ENCODE measurements at regions of chr12 and their contacts with region 1.

Region 1: DNA sequence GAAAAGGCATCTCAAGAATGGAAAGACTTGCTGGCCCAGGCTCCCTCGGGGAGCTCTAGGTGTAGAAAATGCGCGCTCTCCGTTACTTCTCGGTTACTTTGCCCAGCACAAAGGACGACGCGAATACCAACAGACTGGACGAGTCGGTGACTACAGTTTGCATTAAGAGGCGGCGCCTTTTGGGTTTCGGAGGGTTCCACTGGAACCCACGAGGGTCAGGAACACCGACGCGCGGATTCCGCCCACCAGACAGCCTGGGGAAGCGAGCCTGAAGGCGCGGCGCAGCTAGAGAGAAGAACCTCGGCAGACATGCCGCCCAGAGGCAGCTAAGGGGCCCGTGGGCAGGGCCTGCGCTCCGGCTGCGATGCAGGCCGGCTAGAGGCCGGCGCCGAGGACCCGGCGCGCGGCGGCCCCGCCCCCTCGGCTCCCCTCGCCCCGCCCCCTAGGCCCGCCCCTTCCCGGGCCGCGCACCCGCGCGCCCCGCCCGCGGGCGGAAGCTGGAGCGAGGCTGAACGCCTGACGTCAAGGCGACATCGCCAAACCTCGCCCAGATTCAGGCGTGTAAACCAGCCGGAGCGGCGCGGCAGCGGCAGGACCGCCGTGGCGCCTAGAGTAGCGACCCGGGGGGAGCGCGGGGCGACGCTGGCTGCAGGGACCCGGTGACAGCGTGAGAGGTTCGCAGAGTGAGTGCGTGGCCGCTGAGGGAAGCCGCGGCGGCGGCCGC is at the start of gene RAP1B:
- DNase-seq: peak; percentile 90 to 91 (median 90)
- H3K4me3 ChIP-seq: peak within 1 kb of the TSS; percentile 88
- H3K4me3 Mint-ChIP-seq: peak within 1 kb of the TSS; percentile 90 to 98 (median 97)
- H3K27ac ChIP-seq: peak within 1 kb of the TSS; percentile 88
- H3K27ac Mint-ChIP-seq: peak within 1 kb of the TSS; percentile 94 to 99 (median 97)
- H3K4me1 ChIP-seq: peaks cover 39% of the 10 kb centered on the region
- H3K4me1 Mint-ChIP-seq: peaks cover 26 to 49% (median 37%) of the 10 kb centered on the region in 4 donors
- H3K27me3 ChIP-seq: no peaks in the 10 kb centered on the region
- H3K27me3 Mint-ChIP-seq: no peaks in the 10 kb centered on the region
- total RNA-seq, gene RAP1B: 193 to 195 TPM

Region 2: GRCh38 chr12:67268896-67269631 is 1341.5 kb before region 1 on chr12 and contains the start of gene CAND1:
- CTCF ChIA-PET with region 1: no interaction called
- POLR2A ChIA-PET with region 1: interaction called, 6 read pairs
- intact Hi-C with region 1: loop called (anchors 1 kb)
- DNase-seq: peak; percentile 98 to 99 (median 99)
- H3K4me3 ChIP-seq: peak within 1 kb of the TSS; percentile 81 to 84
- H3K4me3 Mint-ChIP-seq: peak within 1 kb of the TSS; percentile 92 to 99 (median 98)
- H3K27ac ChIP-seq: peak within 1 kb of the TSS; percentile 97
- H3K27ac Mint-ChIP-seq: peak within 1 kb of the TSS; percentile 95 to 100 (median 99)
- H3K4me1 ChIP-seq: peaks cover 45% of the 10 kb centered on the region
- H3K4me1 Mint-ChIP-seq: peaks cover 28 to 52% (median 39%) of the 10 kb centered on the region in 4 donors
- H3K27me3 ChIP-seq: no peaks in the 10 kb centered on the region
- H3K27me3 Mint-ChIP-seq: no peaks in the 10 kb centered on the region
- total RNA-seq, gene CAND1: 124 TPM

Region 3: GRCh38 chr12:68319988-68320623 is 290.4 kb before region 1 on chr12:
- CTCF ChIA-PET with region 1: no interaction called
- POLR2A ChIA-PET with region 1: no interaction called
- intact Hi-C with region 1: no loop called
- DNase-seq: no peak
- H3K4me3 ChIP-seq: no peak overlapping the region
- H3K4me3 Mint-ChIP-seq: no peak overlapping the region
- H3K27ac ChIP-seq: no peak overlapping the region
- H3K27ac Mint-ChIP-seq: peak overlapping the region in 1 of 7 donors; percentile 73
- H3K4me1 ChIP-seq: no peaks in the 10 kb centered on the region
- H3K4me1 Mint-ChIP-seq: peaks cover 0 to 2% (median 0%) of the 10 kb centered on the region in 4 donors
- H3K27me3 ChIP-seq: no peaks in the 10 kb centered on the region
- H3K27me3 Mint-ChIP-seq: no peaks in the 10 kb centered on the region

Region 4: DNA sequence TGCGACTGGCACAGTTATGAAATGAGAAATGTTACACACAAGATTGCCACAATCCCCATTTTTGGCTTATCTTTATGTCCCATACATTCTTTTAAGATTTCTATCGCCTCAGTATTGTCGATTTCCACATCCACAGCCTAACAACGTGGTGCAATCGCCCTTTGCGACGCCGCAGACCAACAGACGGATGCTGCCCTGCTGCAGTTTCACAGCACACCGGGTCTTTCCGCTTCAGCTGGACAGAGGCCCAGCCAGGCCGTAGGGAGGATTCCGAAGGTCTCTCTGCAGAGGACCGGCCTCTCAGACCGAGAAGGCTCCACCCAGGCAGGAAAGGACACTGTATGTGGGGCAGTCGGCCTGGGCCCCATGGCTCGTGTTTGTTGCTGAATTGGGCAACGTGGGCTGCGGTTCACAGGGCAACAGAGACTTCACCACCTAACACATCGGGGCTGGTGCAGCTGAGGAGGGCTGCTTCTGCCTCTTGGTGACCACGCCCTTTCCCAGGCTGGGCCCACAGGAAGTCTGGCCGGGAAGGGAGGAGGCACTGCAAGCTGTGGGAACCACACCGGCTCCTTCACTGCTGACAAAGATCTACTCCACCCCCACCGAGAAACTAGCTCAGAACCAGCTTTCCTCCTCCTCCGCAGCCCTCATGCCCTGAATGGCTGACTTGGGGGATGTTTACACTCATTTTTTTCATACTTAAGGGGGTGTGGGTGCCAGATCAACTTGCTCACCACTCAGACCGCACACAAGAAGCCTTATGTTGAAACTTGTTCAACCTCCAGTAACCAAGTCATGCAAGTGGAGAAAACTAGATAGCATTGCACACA is 245.4 kb before region 1 on chr12:
- CTCF ChIA-PET with region 1: interaction called, 46 read pairs
- POLR2A ChIA-PET with region 1: interaction called, 55 read pairs
- intact Hi-C with region 1: loop called (anchors 1 kb)
- DNase-seq: peak; percentile 82 to 91 (median 88)
- H3K4me3 ChIP-seq: peak overlapping the region in 1 of 2 donors; percentile 51
- H3K4me3 Mint-ChIP-seq: peak overlapping the region; percentile 77 to 92 (median 84)
- H3K27ac ChIP-seq: peak overlapping the region; percentile 76
- H3K27ac Mint-ChIP-seq: peak overlapping the region; percentile 91 to 97 (median 96)
- H3K4me1 ChIP-seq: peaks cover 59% of the 10 kb centered on the region
- H3K4me1 Mint-ChIP-seq: peaks cover 54 to 81% (median 60%) of the 10 kb centered on the region in 4 donors
- H3K27me3 ChIP-seq: no peaks in the 10 kb centered on the region
- H3K27me3 Mint-ChIP-seq: no peaks in the 10 kb centered on the region

Region 5: GRCh38 chr12:68462803-68463202 is 147.7 kb before region 1 on chr12:
- CTCF ChIA-PET with region 1: no interaction called
- POLR2A ChIA-PET with region 1: interaction called, 5 read pairs
- intact Hi-C with region 1: loop called (anchors 5 kb)
- DNase-seq: peak in 3 of 5 donors; percentile 23 to 28 (median 23)
- H3K4me3 ChIP-seq: peak overlapping the region; percentile 30 to 42
- H3K4me3 Mint-ChIP-seq: peak overlapping the region; percentile 81 to 93 (median 86)
- H3K27ac ChIP-seq: peak overlapping the region; percentile 34
- H3K27ac Mint-ChIP-seq: peak overlapping the region; percentile 70 to 95 (median 93)
- H3K4me1 ChIP-seq: peaks cover 9% of the 10 kb centered on the region
- H3K4me1 Mint-ChIP-seq: peaks cover 10 to 28% (median 14%) of the 10 kb centered on the region in 4 donors
- H3K27me3 ChIP-seq: no peaks in the 10 kb centered on the region
- H3K27me3 Mint-ChIP-seq: no peaks in the 10 kb centered on the region

Region 6: DNA sequence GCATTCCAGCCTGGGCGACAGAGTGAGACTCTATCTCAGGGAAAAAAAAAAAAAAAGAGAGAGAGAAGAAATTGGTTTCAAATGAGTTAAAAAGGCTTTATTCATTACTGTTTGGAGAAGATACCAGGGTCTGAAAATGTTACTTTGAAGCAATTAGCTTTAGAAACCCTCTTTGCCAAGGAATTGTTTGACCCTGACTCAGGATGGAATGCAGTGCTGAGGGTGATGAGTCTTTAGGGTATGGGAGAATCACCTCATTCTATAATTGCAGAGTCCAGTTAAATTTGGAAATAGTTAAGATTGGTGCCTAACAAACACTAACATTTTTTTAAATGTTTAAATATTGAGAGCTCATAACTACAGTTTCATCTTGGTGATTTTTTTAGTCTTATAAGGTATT is 13.5 kb after region 1 on chr12:
- CTCF ChIA-PET with region 1: interaction called, 3 read pairs
- POLR2A ChIA-PET with region 1: interaction called, 66 read pairs
- intact Hi-C with region 1: loop called (anchors 2 kb)
- DNase-seq: no peak
- H3K4me3 ChIP-seq: no peak overlapping the region
- H3K4me3 Mint-ChIP-seq: peak overlapping the region in 5 of 8 donors; percentile 4 to 55 (median 21)
- H3K27ac ChIP-seq: no peak overlapping the region
- H3K27ac Mint-ChIP-seq: peak overlapping the region in 4 of 7 donors; percentile 31 to 60 (median 52)
- H3K4me1 ChIP-seq: peaks cover 87% of the 10 kb centered on the region
- H3K4me1 Mint-ChIP-seq: peaks cover 52 to 92% (median 74%) of the 10 kb centered on the region in 4 donors
- H3K27me3 ChIP-seq: no peaks in the 10 kb centered on the region
- H3K27me3 Mint-ChIP-seq: no peaks in the 10 kb centered on the region

Region 7: DNA sequence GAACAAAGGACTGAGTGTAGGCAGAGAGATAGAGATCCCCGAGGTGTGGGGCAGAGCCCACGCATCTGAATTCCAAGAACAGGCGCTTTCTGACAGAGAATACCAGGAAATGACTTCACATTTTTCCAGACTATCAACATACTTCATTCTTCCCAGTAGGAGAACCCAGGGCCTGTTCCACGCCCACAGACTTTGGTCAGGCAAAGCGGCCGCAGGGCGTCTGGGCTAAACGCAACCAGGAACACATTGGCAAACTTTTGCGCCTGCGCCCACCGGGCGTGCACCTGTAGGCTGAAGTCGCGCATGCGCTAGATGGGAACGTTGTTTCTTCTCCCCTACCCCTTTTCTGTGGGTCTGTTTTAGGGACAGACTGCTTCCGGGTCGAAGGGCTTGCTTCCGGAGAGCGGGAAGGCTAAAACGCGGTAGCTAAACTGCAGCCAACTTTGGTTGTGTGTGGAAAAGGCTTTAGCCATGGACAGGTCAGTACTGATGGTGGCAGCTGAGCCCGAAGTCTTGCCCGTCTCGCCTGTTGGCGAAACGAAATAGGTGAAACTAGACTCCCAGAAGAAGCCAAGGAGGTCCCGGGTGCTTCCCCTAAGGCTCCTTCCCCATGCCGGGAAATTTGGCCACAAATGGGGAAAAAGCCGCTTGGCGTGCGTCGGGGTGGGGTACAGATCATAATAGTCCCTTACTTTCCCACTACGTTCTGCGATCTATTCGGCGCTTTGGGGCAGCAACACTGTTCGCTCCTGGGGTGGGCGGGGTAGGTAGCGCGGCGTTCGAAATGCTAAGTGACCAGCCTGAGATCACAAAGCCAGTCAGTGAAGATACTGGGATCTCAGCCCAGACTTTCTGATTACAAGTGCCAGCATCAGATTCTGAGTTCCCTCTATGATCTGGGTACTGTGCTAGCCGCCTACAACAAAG is 76.3 kb after region 1 on chr12 and contains the start of gene NUP107:
- CTCF ChIA-PET with region 1: interaction called, 3 read pairs
- POLR2A ChIA-PET with region 1: interaction called, 25 read pairs
- intact Hi-C with region 1: loop called (anchors 1 kb)
- DNase-seq: peak; percentile 95 to 98 (median 95)
- H3K4me3 ChIP-seq: peak within 1 kb of the TSS; percentile 90 to 98
- H3K4me3 Mint-ChIP-seq: peak within 1 kb of the TSS; percentile 98 to 99 (median 98)
- H3K27ac ChIP-seq: peak within 1 kb of the TSS; percentile 85
- H3K27ac Mint-ChIP-seq: peak within 1 kb of the TSS; percentile 91 to 100 (median 99)
- H3K4me1 ChIP-seq: peaks cover 30% of the 10 kb centered on the region
- H3K4me1 Mint-ChIP-seq: peaks cover 14 to 44% (median 29%) of the 10 kb centered on the region in 4 donors
- H3K27me3 ChIP-seq: no peaks in the 10 kb centered on the region
- H3K27me3 Mint-ChIP-seq: no peaks in the 10 kb centered on the region
- total RNA-seq, gene NUP107: 68.9 to 70.7 TPM